PC-9 (cell line): ENCODE measurements at regions of chr1 and their contacts with region 1.

Region 1: DNA sequence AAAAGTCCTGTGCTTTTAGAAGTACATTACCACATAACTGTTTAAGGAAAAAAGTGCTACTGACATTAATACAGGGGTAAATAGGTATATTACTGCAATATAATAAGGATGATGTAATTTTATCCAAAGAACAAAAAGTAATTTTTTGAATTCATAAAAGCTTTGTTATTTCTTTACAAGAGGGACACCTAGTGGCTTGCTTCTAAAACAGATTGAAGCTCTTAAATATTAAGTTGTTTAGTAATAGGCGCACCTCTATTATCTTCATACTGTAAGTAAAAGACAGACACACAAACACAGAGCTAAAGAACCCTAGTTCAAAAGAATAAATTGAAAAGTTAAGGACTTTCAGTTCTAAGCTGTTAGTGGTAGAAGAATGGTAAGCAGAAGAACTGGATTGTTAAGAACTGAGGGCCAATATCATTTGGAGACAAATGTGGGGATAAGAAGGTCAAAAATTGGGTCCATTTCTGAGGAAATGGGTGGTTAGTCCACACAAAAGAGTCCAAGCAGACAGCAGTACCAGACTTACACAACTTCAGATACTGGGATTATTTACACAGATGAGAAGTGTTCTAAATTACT is 15.4 kb downstream of the ZNHIT6 start:
- DNase-seq: peak in 1 of 2 experiments; percentile 67
- H3K4me3 ChIP-seq: no peak overlapping the region
- H3K27ac ChIP-seq: peak overlapping the region; percentile 35
- H3K4me1 ChIP-seq: peaks cover 3% of the 10 kb centered on the region; the same call in 1 of the 2 replicates
- H3K27me3 ChIP-seq: no peaks in the 10 kb centered on the region
- CTCF ChIP-seq: peak; percentile 86

Region 2: DNA sequence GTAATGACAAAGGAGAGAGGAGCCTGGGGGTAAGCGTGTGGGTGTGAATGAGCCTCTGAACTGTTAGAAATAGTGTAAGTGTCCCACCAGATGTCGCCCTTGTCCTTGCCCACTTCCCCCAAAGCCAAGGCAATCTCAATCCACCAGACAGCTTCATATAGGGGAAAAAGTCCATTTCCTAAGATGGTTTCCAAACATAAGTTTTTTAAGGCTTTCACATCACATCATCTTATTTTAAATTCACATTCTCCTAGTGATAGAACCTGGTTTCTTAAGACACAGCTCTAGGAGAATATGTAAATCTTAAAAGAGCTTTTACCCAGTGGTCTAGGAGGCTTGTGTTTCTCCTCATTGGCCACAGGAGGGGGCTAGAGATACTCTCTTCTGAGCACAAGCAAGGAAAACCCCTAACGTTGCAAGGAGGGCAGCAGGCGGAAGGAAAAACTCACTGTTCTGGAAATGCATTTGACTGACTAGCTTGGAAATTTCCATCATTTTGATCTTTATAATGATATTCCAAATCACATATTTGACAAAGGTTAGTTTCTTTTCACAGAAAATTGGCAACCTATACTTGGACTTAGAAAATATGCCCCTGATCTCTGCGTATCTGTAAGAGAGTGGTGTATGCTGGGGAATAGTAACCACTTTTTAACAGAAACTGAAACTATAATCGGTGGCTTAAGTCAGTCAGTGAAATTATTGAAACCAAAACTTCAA is 747.9 kb before region 1 on chr1:
- CTCF ChIA-PET with region 1: no interaction called
- POLR2A ChIA-PET with region 1: no interaction called
- intact Hi-C with region 1: loop called (anchors 10 kb)
- DNase-seq: peak; percentile 61 to 79
- H3K4me3 ChIP-seq: peak overlapping the region; percentile 47; the same call in 1 of the 2 replicates
- H3K27ac ChIP-seq: 0 out of 2 replicates have a peak overlapping the region, but pooled peaks have one; percentile 17
- H3K4me1 ChIP-seq: peaks cover 10% of the 10 kb centered on the region; the same call in 1 of the 2 replicates
- H3K27me3 ChIP-seq: no peaks in the 10 kb centered on the region
- CTCF ChIP-seq: peak; percentile 96

Region 3: GRCh38 chr1:85494904-85495266 is 197.9 kb before region 1 on chr1:
- CTCF ChIA-PET with region 1: no interaction called
- POLR2A ChIA-PET with region 1: no interaction called
- intact Hi-C with region 1: loop called (anchors 10 kb)
- DNase-seq: peak in 1 of 2 experiments; percentile 46
- H3K4me3 ChIP-seq: no peak overlapping the region; the same call in 1 of the 2 replicates
- H3K27ac ChIP-seq: peak overlapping the region; percentile 51
- H3K4me1 ChIP-seq: peaks cover 35% of the 10 kb centered on the region
- H3K27me3 ChIP-seq: no peaks in the 10 kb centered on the region
- CTCF ChIP-seq: no peak

Region 4: GRCh38 chr1:85581802-85582686 is 110.8 kb before region 1 on chr1:
- CTCF ChIA-PET with region 1: interaction called, 8 read pairs
- POLR2A ChIA-PET with region 1: no interaction called
- intact Hi-C with region 1: loop called (anchors 2 kb)
- DNase-seq: peak; percentile 70 to 94
- H3K4me3 ChIP-seq: peak overlapping the region; percentile 65
- H3K27ac ChIP-seq: peak overlapping the region; percentile 86
- H3K4me1 ChIP-seq: peaks cover 51% of the 10 kb centered on the region
- H3K27me3 ChIP-seq: no peaks in the 10 kb centered on the region
- CTCF ChIP-seq: peak; percentile 70

Region 5: GRCh38 chr1:85612704-85613361 is 80.0 kb before region 1 on chr1:
- CTCF ChIA-PET with region 1: interaction called, 10 read pairs
- POLR2A ChIA-PET with region 1: interaction called, 8 read pairs
- intact Hi-C with region 1: loop called (anchors 2 kb)
- DNase-seq: peak; percentile 60 to 98
- H3K4me3 ChIP-seq: peak overlapping the region; percentile 12; the same call in 1 of the 2 replicates
- H3K27ac ChIP-seq: peak overlapping the region; percentile 91
- H3K4me1 ChIP-seq: peaks cover 48% of the 10 kb centered on the region
- H3K27me3 ChIP-seq: no peaks in the 10 kb centered on the region
- CTCF ChIP-seq: peak; percentile 65

Region 6: DNA sequence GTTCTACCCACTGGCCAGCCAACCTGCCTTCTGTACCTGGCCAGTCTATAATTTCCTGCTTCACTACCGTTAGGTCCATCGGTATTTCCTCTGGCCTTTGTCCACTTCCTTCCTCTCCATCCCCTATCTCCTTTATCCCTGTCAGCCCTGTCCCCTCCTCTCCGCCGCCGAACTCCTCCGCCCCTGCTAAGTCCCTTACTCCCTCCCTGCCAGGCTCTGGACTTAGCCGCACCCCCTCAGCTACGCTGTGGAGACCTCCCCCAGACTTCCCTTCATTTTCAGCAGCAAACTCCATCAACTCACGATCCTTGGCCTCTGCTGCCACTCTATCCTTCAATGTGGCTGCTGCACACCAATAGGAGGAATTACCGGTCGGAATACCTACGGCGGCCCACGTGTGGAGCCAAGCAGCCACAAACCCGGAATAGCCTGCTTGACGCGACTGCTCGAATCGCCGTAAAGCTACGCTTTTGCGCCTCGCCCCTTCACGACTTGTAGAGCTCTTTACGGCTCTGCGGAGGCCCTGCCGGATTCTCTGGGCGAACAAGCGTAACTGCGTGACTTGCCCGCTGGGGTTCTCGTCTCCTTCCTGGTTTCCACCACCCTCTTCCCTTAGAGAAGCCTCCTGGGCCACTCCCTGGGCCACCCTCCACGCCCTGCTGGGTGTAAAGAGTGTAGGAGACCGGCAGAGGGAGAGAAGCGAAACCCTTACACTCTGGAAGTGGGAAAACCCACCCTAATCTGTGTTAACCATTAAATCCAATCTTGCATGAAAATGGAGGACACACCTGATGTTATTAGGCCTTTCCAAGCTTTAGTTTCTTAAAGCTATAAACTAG is 15.4 kb after region 1 on chr1 and contains the start of gene ZNHIT6:
- CTCF ChIA-PET with region 1: interaction called, 10 read pairs
- POLR2A ChIA-PET with region 1: interaction called, 4 read pairs
- intact Hi-C with region 1: no loop called
- DNase-seq: peak; percentile 91 to 98
- H3K4me3 ChIP-seq: peak within 1 kb of the TSS; percentile 79
- H3K27ac ChIP-seq: peak within 1 kb of the TSS; percentile 67
- H3K4me1 ChIP-seq: peaks cover 22% of the 10 kb centered on the region
- H3K27me3 ChIP-seq: no peaks in the 10 kb centered on the region
- CTCF ChIP-seq: peak; percentile 73
- total RNA-seq, gene ZNHIT6: 13.7 and 16.1 TPM in 2 replicates

Region 7: GRCh38 chr1:85734931-85735330 is 42.1 kb after region 1 on chr1:
- CTCF ChIA-PET with region 1: no interaction called
- POLR2A ChIA-PET with region 1: no interaction called
- intact Hi-C with region 1: no loop called
- DNase-seq: no peak
- H3K4me3 ChIP-seq: no peak overlapping the region
- H3K27ac ChIP-seq: no peak overlapping the region
- H3K4me1 ChIP-seq: no peaks in the 10 kb centered on the region
- H3K27me3 ChIP-seq: no peaks in the 10 kb centered on the region
- CTCF ChIP-seq: no peak

Region 8: GRCh38 chr1:85850238-85850637 is 157.4 kb after region 1 on chr1:
- CTCF ChIA-PET with region 1: no interaction called
- POLR2A ChIA-PET with region 1: interaction called, 6 read pairs
- intact Hi-C with region 1: loop called (anchors 1 kb)
- DNase-seq: peak; percentile 17 to 97
- H3K4me3 ChIP-seq: no peak overlapping the region
- H3K27ac ChIP-seq: peak overlapping the region; percentile 61
- H3K4me1 ChIP-seq: peaks cover 29% of the 10 kb centered on the region
- H3K27me3 ChIP-seq: no peaks in the 10 kb centered on the region
- CTCF ChIP-seq: peak; percentile 57